ENCODE measurements at regions of chr1 and their contacts with region 1.

Region 1: DNA sequence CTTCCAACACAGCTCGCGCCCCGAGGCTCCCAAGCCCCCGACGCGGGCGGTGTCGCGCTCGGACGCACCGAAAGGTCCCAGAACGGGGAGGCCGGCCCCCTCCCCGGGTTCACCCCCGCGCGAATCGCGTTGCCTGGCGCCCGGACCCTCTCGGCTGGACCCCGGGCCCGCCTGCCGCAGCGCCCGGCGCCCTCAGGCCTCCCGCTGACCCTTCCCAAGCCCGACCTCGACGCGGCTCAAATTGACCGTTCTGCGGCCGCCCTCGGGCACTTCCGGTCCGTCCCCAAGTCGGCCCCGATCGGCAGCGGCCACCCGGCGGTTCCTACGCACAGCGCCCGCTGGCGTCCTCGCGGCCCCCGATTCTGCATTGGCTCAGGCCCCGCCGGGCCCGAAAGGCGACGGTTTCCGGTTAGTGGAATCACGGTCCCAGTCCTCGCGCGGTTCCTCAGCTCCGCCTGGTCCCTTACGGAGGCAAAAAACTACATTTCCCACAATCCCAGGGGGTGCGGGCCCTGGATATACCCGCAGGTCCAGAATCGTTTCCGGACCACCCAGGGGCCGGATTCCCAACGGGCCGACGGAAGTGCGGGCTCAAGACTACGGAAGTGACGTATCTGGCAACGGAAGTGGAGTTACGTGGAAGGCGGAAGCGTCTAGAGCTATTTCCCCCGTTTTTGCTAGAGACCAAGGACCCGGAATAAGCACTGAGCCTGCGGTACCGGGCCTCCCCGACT is at the start of gene AURKAIP1:
- DNase-seq: peak; percentile 96 to 99
- H3K4me3 ChIP-seq: peak within 1 kb of the TSS; percentile 93 to 100
- H3K27ac ChIP-seq: peak within 1 kb of the TSS; percentile 97 to 98
- H3K4me1 ChIP-seq: peaks cover 23 to 26% of the 10 kb centered on the region in 2 donors
- H3K27me3 ChIP-seq: no peaks in the 10 kb centered on the region
- CTCF ChIP-seq: peak in 2 of 3 experiments; percentile 10 to 32
- total RNA-seq, gene AURKAIP1: 247 TPM

Region 2: GRCh38 chr1:1231400-1232223 is 143.5 kb before region 1 on chr1 and contains the start of gene SDF4:
- intact Hi-C with region 1: loop called (anchors 1 kb)
- DNase-seq: peak; percentile 77 to 98
- H3K4me3 ChIP-seq: peak within 1 kb of the TSS; percentile 91 to 95
- H3K27ac ChIP-seq: peak within 1 kb of the TSS; percentile 89 to 94
- H3K4me1 ChIP-seq: peaks cover 23% of the 10 kb centered on the region in 2 donors
- H3K27me3 ChIP-seq: no peaks in the 10 kb centered on the region
- CTCF ChIP-seq: no peak
- total RNA-seq, gene SDF4: 223 TPM

Region 3: GRCh38 chr1:1307908-1308755 is 67.0 kb before region 1 on chr1 and contains the starts of genes ACAP3 and PUSL1:
- intact Hi-C with region 1: loop called (anchors 2 kb)
- DNase-seq: peak; percentile 63 to 92
- H3K4me3 ChIP-seq: peak within 1 kb of the TSS; percentile 94 to 99
- H3K27ac ChIP-seq: peak within 1 kb of the TSS; percentile 95
- H3K4me1 ChIP-seq: peaks cover 25 to 40% of the 10 kb centered on the region in 2 donors
- H3K27me3 ChIP-seq: no peaks in the 10 kb centered on the region
- CTCF ChIP-seq: peak in 1 of 3 experiments; percentile 4
- total RNA-seq, gene ACAP3: 105 TPM
- total RNA-seq, gene PUSL1: 28.3 TPM

Region 4: GRCh38 chr1:1358433-1359261 is 16.4 kb before region 1 on chr1 and contains the start of gene MXRA8:
- intact Hi-C with region 1: loop called (anchors 2 kb)
- DNase-seq: peak; percentile 51 to 87
- H3K4me3 ChIP-seq: peak within 1 kb of the TSS; percentile 54 to 65
- H3K27ac ChIP-seq: peak within 1 kb of the TSS; percentile 90 to 92
- H3K4me1 ChIP-seq: peaks cover 30 to 65% of the 10 kb centered on the region in 2 donors
- H3K27me3 ChIP-seq: no peaks in the 10 kb centered on the region
- CTCF ChIP-seq: no peak
- total RNA-seq, gene MXRA8: 345 TPM

Region 5: DNA sequence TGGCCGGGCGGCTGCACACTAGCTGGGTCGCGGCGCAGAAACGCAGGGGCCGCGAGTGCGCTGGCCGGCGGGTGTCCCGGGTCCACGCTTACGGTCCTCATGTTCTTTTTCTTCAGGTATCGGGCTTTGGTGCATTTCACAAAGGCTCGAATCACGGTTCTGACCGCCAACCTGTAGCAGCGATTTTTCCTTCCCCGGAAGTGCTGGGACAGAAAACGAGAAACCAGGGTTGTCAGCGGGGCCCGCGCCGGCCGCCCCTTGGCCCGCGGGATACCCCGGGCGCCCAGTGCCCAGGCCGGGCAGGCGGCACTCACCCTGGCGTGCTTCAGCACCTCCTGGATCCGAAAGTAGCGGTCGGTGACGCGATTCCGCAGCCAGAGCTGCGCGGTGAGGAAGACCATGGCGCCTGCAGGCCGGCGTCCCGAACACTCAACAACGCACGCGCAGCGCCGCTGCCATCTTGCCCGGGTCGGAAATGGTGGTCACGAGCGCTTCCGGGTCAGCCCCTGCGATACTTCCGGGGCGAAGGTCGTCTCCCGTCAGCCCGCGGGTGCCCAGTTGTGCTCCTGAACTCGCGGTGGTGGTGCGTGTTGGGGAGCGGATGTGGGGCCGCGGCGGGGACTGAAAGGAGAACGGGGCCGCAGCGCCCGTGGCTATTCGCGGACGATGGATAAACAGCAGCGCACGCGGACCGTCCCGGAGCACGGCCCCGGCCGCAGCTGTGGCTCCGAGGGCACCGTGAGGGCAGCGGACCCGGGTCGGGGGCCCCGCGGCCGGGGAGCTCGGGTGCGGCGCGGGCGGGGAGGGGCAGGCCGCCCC is 31.9 kb after region 1 on chr1 and contains the start of gene MRPL20:
- intact Hi-C with region 1: loop called (anchors 1 kb)
- DNase-seq: peak; percentile 76 to 97
- H3K4me3 ChIP-seq: peak within 1 kb of the TSS; percentile 68 to 93
- H3K27ac ChIP-seq: peak within 1 kb of the TSS; percentile 72 to 77
- H3K4me1 ChIP-seq: peaks cover 7 to 25% of the 10 kb centered on the region in 2 donors
- H3K27me3 ChIP-seq: no peaks in the 10 kb centered on the region
- CTCF ChIP-seq: no peak
- total RNA-seq, gene MRPL20: 63.4 TPM

Region 6: DNA sequence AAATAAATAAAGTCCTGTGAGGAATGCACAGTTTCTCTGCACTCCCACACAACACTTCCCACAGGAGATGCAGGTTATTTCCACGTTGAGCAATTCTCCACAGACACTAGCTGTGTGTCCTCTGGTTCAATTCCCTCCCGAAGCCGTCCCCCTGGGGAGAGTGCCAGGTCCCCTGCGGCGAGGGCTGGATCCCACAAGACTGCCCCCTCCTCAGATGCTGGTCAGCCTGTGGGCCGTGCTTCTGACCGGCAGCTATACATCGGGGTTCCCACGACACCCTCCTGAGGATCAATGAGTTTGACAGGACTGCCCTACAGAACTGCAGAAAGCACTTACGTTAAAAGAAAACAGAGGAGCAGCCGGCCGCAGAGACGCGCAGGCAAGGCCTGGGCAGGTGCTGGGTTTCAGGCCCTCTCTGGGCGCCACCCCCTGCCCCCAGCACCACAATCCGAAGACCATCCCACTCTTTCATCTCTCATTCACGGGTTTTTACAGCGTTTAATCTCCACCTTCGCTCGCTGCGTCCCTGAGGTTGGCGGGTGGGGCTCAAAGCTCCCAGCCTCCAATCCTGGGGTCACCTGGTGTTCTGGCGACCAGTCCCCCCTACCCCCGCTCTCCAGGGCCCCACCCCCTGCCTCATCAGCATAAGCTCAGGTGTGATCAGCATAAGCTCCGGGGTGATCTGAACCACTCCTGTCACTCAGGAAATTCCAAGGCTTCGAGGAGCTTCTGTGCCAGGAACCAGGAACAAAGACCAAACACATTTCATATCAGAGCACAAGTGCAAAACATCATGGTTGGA is 308.2 kb after region 1 on chr1:
- intact Hi-C with region 1: no loop called
- DNase-seq: no peak
- H3K4me3 ChIP-seq: no peak overlapping the region
- H3K27ac ChIP-seq: peak overlapping the region in 1 of 2 donors; percentile 12
- H3K4me1 ChIP-seq: peaks cover 6 to 9% of the 10 kb centered on the region in 2 donors
- H3K27me3 ChIP-seq: no peaks in the 10 kb centered on the region
- CTCF ChIP-seq: no peak